ENCODE measurements at regions of chr5 and their contacts with region 1.

Region 1: GRCh38 chr5:37940931-37941623 is 101.2 kb upstream of the GDNF start:
- DNase-seq: peak; percentile 77
- H3K4me3 Mint-ChIP-seq: no peak overlapping the region
- H3K27ac Mint-ChIP-seq: peak overlapping the region; percentile 83
- H3K4me1 Mint-ChIP-seq: peaks cover 13% of the 10 kb centered on the region
- H3K27me3 Mint-ChIP-seq: no peaks in the 10 kb centered on the region
- CTCF ChIP-seq: no peak

Region 2: GRCh38 chr5:37751227-37751626 is 189.8 kb before region 1 on chr5:
- CTCF ChIA-PET with region 1: no interaction called
- POLR2A ChIA-PET with region 1: no interaction called
- intact Hi-C with region 1: no loop called
- DNase-seq: no peak
- H3K4me3 Mint-ChIP-seq: no peak overlapping the region
- H3K27ac Mint-ChIP-seq: no peak overlapping the region
- H3K4me1 Mint-ChIP-seq: peaks cover 11% of the 10 kb centered on the region
- H3K27me3 Mint-ChIP-seq: no peaks in the 10 kb centered on the region
- CTCF ChIP-seq: no peak

Region 3: DNA sequence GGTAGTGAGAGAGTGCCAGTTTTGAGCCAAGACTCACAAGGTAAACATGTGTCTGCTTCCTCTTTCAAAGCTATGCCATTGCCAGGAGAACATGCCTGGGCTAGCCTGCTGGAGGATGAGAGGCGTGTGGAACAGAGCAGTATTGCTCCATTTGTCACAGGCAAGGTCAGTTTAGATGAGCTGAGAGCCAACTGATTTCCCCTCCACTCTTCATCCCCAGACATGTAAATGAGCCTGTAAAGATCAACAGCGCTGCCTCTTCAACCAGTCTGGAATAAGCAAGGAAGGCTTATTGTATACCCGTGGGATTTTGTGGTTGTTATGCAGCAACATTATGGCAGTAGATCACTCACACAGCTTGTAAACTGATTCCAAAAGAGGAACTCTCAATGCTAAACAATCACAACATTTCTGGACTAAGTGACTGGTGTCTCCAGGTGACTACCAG is 93.1 kb before region 1 on chr5:
- CTCF ChIA-PET with region 1: no interaction called
- POLR2A ChIA-PET with region 1: interaction called, 10 read pairs
- intact Hi-C with region 1: no loop called
- DNase-seq: peak; percentile 93
- H3K4me3 Mint-ChIP-seq: no peak overlapping the region
- H3K27ac Mint-ChIP-seq: peak overlapping the region; percentile 93
- H3K4me1 Mint-ChIP-seq: peaks cover 11% of the 10 kb centered on the region
- H3K27me3 Mint-ChIP-seq: no peaks in the 10 kb centered on the region
- CTCF ChIP-seq: no peak

Measured in MCF 10A (cell line).